ENCODE measurements at regions of chr6 and their contacts with region 1.

Region 1: GRCh38 chr6:139029470-139030210 is 1.1 kb downstream of the ABRACL start:
- DNase-seq: no peak
- H3K4me3 ChIP-seq: peak overlapping the region; percentile 82 to 87 (median 86)
- H3K27ac ChIP-seq: peak overlapping the region; percentile 78 to 87 (median 80)
- H3K4me1 ChIP-seq: peaks cover 10 to 21% (median 18%) of the 10 kb centered on the region in 4 donors
- H3K27me3 ChIP-seq: peaks cover 0 to 4% (median 0%) of the 10 kb centered on the region in 4 donors
- CTCF ChIP-seq: no peak
- EP300 ChIP-seq: no peak
- POLR2A ChIP-seq: no peak

Region 2: GRCh38 chr6:138970856-138971425 is 58.7 kb before region 1 on chr6:
- intact Hi-C with region 1: no loop called
- DNase-seq: no peak
- H3K4me3 ChIP-seq: no peak overlapping the region
- H3K27ac ChIP-seq: peak overlapping the region; percentile 45 to 60 (median 50)
- H3K4me1 ChIP-seq: peaks cover 44 to 76% (median 54%) of the 10 kb centered on the region in 4 donors
- H3K27me3 ChIP-seq: no peaks in the 10 kb centered on the region
- CTCF ChIP-seq: no peak
- EP300 ChIP-seq: no peak
- POLR2A ChIP-seq: no peak

Region 3: DNA sequence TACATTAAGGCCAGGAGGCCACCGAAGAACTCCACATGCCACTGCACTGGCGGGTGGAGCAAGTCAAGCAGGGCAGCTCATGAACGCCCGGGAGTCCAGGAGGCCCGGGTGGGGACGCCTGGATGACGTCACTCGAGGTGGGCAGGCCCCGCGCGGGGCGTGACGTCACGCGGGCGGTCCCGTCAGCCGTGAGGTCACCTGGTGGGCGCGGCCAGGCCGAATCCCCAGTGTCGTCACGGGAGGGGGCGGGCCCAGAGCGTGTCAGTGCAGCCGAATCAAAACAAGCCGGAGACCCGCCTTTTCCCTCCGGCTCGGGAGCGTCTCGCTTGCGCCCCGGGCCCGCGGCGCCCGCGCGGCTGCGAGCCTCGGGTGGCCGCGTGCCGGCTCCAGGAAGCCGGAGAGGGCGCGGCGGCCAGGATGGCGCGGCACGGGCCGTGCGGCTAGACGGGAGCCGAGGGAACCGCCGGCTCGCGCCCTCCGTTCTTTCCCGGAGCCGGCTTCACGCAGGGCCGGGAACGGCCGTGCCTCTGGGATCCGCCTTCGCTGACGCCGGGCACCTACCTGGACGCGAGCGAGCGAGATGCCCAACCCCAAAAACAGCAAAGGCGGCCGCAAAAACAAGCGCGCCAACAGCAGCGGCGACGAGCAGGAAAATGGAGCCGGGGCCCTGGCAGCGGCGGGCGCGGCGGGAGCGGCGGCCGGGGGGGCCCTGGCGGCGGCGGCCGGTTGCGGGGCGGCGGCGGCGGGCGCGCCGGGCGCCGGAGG is 105.4 kb after region 1 on chr6 and contains the start of gene HECA:
- intact Hi-C with region 1: loop called (anchors 5 kb)
- DNase-seq: peak; percentile 99
- H3K4me3 ChIP-seq: peak within 1 kb of the TSS; percentile 93 to 97 (median 94)
- H3K27ac ChIP-seq: peak within 1 kb of the TSS; percentile 97 to 98 (median 98)
- H3K4me1 ChIP-seq: peaks cover 23 to 56% (median 45%) of the 10 kb centered on the region in 4 donors
- H3K27me3 ChIP-seq: no peaks in the 10 kb centered on the region
- CTCF ChIP-seq: no peak
- EP300 ChIP-seq: no peak
- POLR2A ChIP-seq: peak; percentile 31
- total RNA-seq, gene HECA: 43.2 to 68.4 (median 52.4) TPM

Measured in esophagus muscularis mucosa (tissue), 4 donors.